Uterus (tissue), 4 donors: ENCODE measurements at regions of chr13 and their contacts with region 1.

Region 1: DNA sequence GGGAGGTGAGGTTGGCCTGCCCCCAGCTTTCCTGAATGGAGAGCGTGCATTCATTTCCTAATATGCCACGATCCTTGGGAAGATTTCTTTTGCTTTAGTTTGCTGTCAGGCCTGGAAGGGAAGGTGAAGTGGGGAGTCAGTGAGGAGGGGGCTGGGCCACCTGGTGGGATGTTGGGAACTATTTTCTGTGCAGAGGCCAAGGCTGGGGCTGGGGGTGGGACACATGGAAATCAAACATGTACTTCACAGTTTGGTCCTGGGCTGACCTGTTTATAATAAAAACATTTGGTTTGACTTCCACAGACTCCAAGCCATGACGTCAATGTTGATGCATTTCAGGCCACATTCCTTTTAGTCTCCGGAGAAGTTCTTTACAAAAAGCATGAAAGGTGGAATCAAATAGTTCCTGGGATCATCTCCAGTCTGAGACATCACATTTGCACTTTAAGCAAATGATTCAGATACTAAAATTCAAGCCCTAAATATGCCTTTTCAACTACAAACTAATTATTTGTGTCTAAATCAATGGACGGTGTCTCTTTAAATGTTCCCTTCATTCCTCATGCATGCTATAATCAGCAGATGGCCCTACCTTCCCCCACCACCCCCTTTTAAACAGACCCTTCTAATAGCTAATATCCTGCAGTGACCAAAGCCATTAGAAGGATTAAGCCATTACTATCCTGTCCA is 41.5 kb upstream of the MEDAG start:
- DNase-seq: peak; percentile 40 to 44
- H3K4me3 ChIP-seq: no peak overlapping the region
- H3K27ac ChIP-seq: peak overlapping the region; percentile 90 to 97
- H3K4me1 ChIP-seq: peaks cover 7 to 10% of the 10 kb centered on the region in 2 donors
- H3K27me3 ChIP-seq: no peaks in the 10 kb centered on the region
- CTCF ChIP-seq: no peak
- POLR2A ChIP-seq: no peak

Region 2: DNA sequence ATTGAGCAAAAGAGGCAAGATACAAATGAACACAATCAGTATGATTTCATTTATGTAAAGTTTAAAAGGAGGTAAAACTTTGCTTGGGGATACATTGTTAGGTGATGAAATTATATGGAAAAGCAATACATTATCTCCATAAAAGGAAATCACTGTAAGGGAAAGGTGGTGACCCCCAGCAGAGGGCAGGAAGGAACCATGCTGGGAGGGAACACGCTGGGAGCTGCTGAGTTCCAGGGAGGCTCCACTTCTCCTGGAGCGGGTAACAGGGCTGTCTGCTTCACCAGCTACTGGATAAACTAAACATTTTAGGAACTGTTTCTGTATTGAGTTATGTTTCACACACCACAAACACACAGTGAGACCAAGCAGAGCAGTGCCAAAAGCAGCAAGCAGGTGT is 648.5 kb before region 1 on chr13:
- intact Hi-C with region 1: loop called (anchors 5 kb)
- DNase-seq: no peak
- H3K4me3 ChIP-seq: no peak overlapping the region
- H3K27ac ChIP-seq: no peak overlapping the region
- H3K4me1 ChIP-seq: no peaks in the 10 kb centered on the region
- H3K27me3 ChIP-seq: no peaks in the 10 kb centered on the region
- CTCF ChIP-seq: no peak
- POLR2A ChIP-seq: no peak

Region 3: GRCh38 chr13:30535046-30535445 is 329.5 kb before region 1 on chr13:
- intact Hi-C with region 1: no loop called
- DNase-seq: no peak
- H3K4me3 ChIP-seq: no peak overlapping the region
- H3K27ac ChIP-seq: no peak overlapping the region
- H3K4me1 ChIP-seq: no peaks in the 10 kb centered on the region
- H3K27me3 ChIP-seq: no peaks in the 10 kb centered on the region
- CTCF ChIP-seq: no peak
- POLR2A ChIP-seq: no peak

Region 4: GRCh38 chr13:30763786-30764413 is 100.7 kb before region 1 on chr13:
- intact Hi-C with region 1: no loop called
- DNase-seq: no peak
- H3K4me3 ChIP-seq: no peak overlapping the region
- H3K27ac ChIP-seq: no peak overlapping the region
- H3K4me1 ChIP-seq: no peaks in the 10 kb centered on the region
- H3K27me3 ChIP-seq: no peaks in the 10 kb centered on the region
- CTCF ChIP-seq: no peak
- POLR2A ChIP-seq: no peak

Region 5: GRCh38 chr13:31035185-31035965 is 170.8 kb after region 1 on chr13:
- intact Hi-C with region 1: no loop called
- DNase-seq: peak; percentile 33 to 50
- H3K4me3 ChIP-seq: no peak overlapping the region
- H3K27ac ChIP-seq: no peak overlapping the region
- H3K4me1 ChIP-seq: peaks cover 0 to 4% of the 10 kb centered on the region in 2 donors
- H3K27me3 ChIP-seq: no peaks in the 10 kb centered on the region
- CTCF ChIP-seq: no peak
- POLR2A ChIP-seq: no peak